ENCODE measurements at regions of chr3 and their contacts with region 1.

Region 1: DNA sequence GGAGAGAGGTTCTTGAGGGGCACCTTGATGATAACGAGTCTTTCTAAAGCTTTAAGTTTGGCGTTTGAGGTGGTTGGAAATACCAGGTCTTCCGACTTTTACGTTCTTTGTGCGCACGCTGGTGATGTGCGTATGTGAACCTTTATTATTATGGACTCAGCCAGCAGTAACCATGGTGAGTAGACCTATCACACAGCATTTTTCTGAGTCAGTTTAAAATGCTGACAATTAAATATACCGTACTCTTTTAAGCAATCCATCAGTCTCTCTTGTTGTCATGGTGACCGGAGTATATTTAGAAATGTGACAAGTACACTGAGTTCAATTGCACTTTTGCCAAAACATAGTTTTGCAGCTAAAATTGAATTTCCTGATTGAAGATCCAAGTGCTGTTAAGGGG is 172.2 kb downstream of the LPP start:
- DNase-seq: no peak
- ATAC-seq: peak; percentile 42 to 66
- H3K4me3 ChIP-seq: no peak overlapping the region
- H3K27ac ChIP-seq: peak overlapping the region; percentile 70 to 86 (median 80)
- H3K4me1 ChIP-seq: peaks cover 34 to 64% of the 10 kb centered on the region in 2 donors
- H3K27me3 ChIP-seq: no peaks in the 10 kb centered on the region
- CTCF ChIP-seq: no peak
- POLR2A ChIP-seq: no peak

Region 2: GRCh38 chr3:188270423-188270972 is 55.6 kb before region 1 on chr3:
- in situ Hi-C with region 1: no loop called
- intact Hi-C with region 1: no loop called
- DNase-seq: no peak
- ATAC-seq: no peak
- H3K4me3 ChIP-seq: no peak overlapping the region
- H3K27ac ChIP-seq: peak overlapping the region; percentile 94 to 99 (median 96)
- H3K4me1 ChIP-seq: peaks cover 63 to 72% of the 10 kb centered on the region in 2 donors
- H3K27me3 ChIP-seq: no peaks in the 10 kb centered on the region
- CTCF ChIP-seq: no peak
- POLR2A ChIP-seq: no peak

Region 3: DNA sequence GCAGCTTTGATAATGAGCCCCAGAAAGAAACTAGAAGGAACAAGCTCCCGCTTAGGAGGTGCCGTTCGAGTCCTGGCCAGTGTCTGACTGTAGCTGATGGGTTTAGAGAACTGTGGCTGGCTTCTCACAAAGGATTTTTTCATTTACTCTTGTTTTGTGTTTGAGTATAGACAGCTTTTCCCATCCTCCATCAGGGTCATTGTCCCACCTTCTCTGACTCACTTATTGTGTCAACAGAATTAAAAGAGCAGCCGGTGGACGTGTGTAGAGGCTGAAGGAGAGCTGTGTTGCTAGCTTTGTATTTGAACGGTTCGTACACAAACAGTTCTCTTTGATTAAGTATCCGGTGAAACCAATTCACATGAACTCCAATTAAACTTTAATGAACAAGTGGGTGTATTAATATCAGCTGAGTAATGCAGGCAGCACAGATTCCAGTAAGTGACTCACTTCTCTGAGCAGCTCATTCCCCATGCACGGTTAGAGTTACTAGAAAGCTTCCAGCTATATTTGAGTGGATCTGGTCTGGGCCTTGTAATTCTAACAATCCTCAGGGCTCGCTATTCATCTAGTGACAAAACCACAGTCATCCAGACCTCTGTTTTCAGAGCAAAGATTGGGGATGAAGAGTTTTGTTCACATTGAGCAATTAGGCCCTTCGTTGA is 31.2 kb before region 1 on chr3:
- in situ Hi-C with region 1: no loop called
- intact Hi-C with region 1: loop called (anchors 2 kb)
- DNase-seq: peak; percentile 59 to 60
- ATAC-seq: peak; percentile 98
- H3K4me3 ChIP-seq: peak overlapping the region; percentile 16 to 28 (median 24)
- H3K27ac ChIP-seq: peak overlapping the region; percentile 84 to 89 (median 86)
- H3K4me1 ChIP-seq: peaks cover 44 to 47% of the 10 kb centered on the region in 2 donors
- H3K27me3 ChIP-seq: no peaks in the 10 kb centered on the region
- CTCF ChIP-seq: no peak
- POLR2A ChIP-seq: no peak

Region 4: GRCh38 chr3:188407158-188407880 is 81.2 kb after region 1 on chr3:
- in situ Hi-C with region 1: no loop called
- intact Hi-C with region 1: no loop called
- DNase-seq: no peak
- ATAC-seq: peak in 1 of 2 donors; percentile 27
- H3K4me3 ChIP-seq: no peak overlapping the region
- H3K27ac ChIP-seq: no peak overlapping the region
- H3K4me1 ChIP-seq: peaks cover 0 to 4% of the 10 kb centered on the region in 2 donors
- H3K27me3 ChIP-seq: no peaks in the 10 kb centered on the region
- CTCF ChIP-seq: no peak
- POLR2A ChIP-seq: no peak

Region 5: DNA sequence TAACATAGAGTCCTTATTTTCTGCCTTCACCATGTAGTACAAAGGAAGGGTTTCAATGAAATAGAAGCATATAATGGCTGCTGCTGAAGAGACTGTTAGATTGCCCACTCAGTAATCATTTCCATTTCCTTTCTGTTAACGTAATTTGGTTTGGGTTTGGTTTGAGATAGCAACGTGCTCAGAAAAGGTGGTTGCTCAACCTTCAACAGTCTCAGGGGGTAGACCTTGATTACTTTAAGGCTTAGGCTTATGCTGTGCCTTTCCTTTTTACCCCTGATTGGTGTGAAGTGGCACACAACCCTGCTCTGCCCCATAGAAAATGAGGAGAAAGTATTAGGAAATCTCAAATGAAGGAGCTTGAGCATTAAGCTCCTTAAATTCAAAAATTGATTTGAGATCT is 1141.3 kb after region 1 on chr3:
- in situ Hi-C with region 1: no loop called
- intact Hi-C with region 1: no loop called
- DNase-seq: no peak
- ATAC-seq: no peak
- H3K4me3 ChIP-seq: no peak overlapping the region
- H3K27ac ChIP-seq: no peak overlapping the region
- H3K4me1 ChIP-seq: no peaks in the 10 kb centered on the region
- H3K27me3 ChIP-seq: no peaks in the 10 kb centered on the region
- CTCF ChIP-seq: no peak
- POLR2A ChIP-seq: no peak